B cell (primary cell): ENCODE measurements at regions of chr3 and their contacts with region 1.

Region 1: DNA sequence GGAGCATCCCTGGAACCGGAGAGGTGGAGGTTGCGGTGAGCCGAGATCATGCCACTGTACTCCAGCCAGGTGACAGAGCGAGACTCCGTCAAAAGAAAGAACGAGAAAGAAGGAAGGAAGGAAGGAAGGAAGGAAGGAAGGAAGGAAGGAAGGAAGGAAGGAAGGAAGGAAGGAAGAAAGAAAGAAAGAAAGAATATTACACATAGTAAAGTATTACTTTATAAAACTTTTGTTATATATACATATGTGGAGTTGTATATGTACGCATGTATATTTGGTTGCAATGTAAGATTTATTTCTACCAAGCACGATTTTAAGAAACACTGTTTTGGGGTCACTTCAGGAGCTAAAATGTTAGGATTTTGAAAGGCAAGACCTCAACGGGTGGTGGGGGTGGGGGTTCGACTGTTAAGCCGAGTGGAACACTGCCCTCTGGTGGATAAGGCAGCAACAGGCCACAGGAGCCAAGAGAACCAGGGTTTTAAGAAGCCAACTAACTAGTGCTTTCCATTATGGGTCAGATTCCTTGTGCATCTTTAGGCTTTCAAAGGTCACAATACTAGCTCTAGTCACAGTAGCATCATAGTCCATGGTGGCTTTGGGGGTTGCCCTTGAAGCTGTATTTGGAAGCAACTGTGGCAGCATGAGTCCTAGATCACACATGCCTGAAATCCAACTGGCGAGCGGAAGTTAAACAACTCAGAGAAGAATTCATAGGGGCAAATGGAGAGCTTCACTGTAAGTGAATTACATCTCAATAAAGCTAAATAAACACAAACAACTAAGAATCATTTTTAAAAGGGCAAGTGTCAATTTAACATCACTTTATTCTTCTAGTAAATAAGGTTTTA is 22.5 kb downstream of the GLB1 start:
- DNase-seq: peak; percentile 79
- ATAC-seq: peak; percentile 69
- H3K4me3 ChIP-seq: no peak overlapping the region
- H3K4me3 Mint-ChIP-seq: no peak overlapping the region
- H3K27ac ChIP-seq: no peak overlapping the region
- H3K27ac Mint-ChIP-seq: no peak overlapping the region
- H3K4me1 ChIP-seq: peaks cover 3 to 7% of the 10 kb centered on the region in 2 donors
- H3K4me1 Mint-ChIP-seq: peaks cover 26% of the 10 kb centered on the region
- H3K27me3 ChIP-seq: no peaks in the 10 kb centered on the region
- H3K27me3 Mint-ChIP-seq: no peaks in the 10 kb centered on the region
- CTCF ChIP-seq: peak; percentile 85

Region 2: DNA sequence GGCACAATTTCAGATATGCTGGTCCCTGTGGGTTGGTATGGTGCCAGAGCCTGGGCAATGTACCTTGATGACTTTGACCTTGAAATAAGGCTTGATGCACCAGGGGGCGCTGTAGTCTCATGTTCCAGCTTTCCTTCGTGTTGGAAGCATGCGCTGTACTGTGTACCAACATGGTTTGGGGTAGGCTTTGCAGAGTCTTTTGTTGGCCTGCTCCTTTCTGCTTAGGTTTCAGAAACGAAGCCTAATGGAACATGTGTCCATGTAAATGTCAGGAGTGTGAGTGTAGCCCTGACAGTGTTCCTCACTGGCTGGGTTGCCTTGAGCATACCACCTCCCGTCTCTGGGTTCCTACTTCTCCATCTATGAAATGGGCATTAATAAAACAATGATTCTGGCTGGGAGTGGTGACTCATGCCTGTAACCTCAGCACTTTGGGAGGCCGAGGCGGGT is 126.6 kb before region 1 on chr3:
- CTCF ChIA-PET with region 1: interaction called, 132 read pairs
- POLR2A ChIA-PET with region 1: interaction called, 6 read pairs
- intact Hi-C with region 1: no loop called
- DNase-seq: peak; percentile 88
- ATAC-seq: peak; percentile 83
- H3K4me3 ChIP-seq: no peak overlapping the region
- H3K4me3 Mint-ChIP-seq: no peak overlapping the region
- H3K27ac ChIP-seq: no peak overlapping the region
- H3K27ac Mint-ChIP-seq: no peak overlapping the region
- H3K4me1 ChIP-seq: peaks cover 0 to 18% of the 10 kb centered on the region in 2 donors
- H3K4me1 Mint-ChIP-seq: peaks cover 13% of the 10 kb centered on the region
- H3K27me3 ChIP-seq: no peaks in the 10 kb centered on the region
- H3K27me3 Mint-ChIP-seq: no peaks in the 10 kb centered on the region
- CTCF ChIP-seq: peak; percentile 87

Region 3: GRCh38 chr3:33063651-33064051 is 10.8 kb before region 1 on chr3:
- CTCF ChIA-PET with region 1: interaction called, 26 read pairs
- POLR2A ChIA-PET with region 1: interaction called, 3 read pairs
- intact Hi-C with region 1: no loop called
- DNase-seq: peak; percentile 68
- ATAC-seq: peak; percentile 82
- H3K4me3 ChIP-seq: no peak overlapping the region
- H3K4me3 Mint-ChIP-seq: peak overlapping the region; percentile 49
- H3K27ac ChIP-seq: peak overlapping the region in 1 of 2 donors; percentile 50
- H3K27ac Mint-ChIP-seq: peak overlapping the region; percentile 92
- H3K4me1 ChIP-seq: peaks cover 28 to 68% of the 10 kb centered on the region in 2 donors
- H3K4me1 Mint-ChIP-seq: peaks cover 43% of the 10 kb centered on the region
- H3K27me3 ChIP-seq: no peaks in the 10 kb centered on the region
- H3K27me3 Mint-ChIP-seq: no peaks in the 10 kb centered on the region
- CTCF ChIP-seq: no peak

Region 4: GRCh38 chr3:33096093-33096868 is 21.8 kb after region 1 on chr3:
- CTCF ChIA-PET with region 1: interaction called, 6 read pairs
- POLR2A ChIA-PET with region 1: no interaction called
- intact Hi-C with region 1: loop called (anchors 2 kb)
- DNase-seq: peak; percentile 83
- ATAC-seq: peak; percentile 63
- H3K4me3 ChIP-seq: peak overlapping the region; percentile 83 to 100 (median 94)
- H3K4me3 Mint-ChIP-seq: peak overlapping the region; percentile 96
- H3K27ac ChIP-seq: peak overlapping the region; percentile 94 to 96
- H3K27ac Mint-ChIP-seq: peak overlapping the region; percentile 94
- H3K4me1 ChIP-seq: peaks cover 11 to 21% of the 10 kb centered on the region in 2 donors
- H3K4me1 Mint-ChIP-seq: peaks cover 35% of the 10 kb centered on the region
- H3K27me3 ChIP-seq: no peaks in the 10 kb centered on the region
- H3K27me3 Mint-ChIP-seq: no peaks in the 10 kb centered on the region
- CTCF ChIP-seq: no peak

Region 5: GRCh38 chr3:34000301-34000700 is 925.9 kb after region 1 on chr3:
- CTCF ChIA-PET with region 1: no interaction called
- POLR2A ChIA-PET with region 1: no interaction called
- intact Hi-C with region 1: no loop called
- DNase-seq: no peak
- ATAC-seq: no peak
- H3K4me3 ChIP-seq: no peak overlapping the region
- H3K4me3 Mint-ChIP-seq: no peak overlapping the region
- H3K27ac ChIP-seq: no peak overlapping the region
- H3K27ac Mint-ChIP-seq: no peak overlapping the region
- H3K4me1 ChIP-seq: no peaks in the 10 kb centered on the region
- H3K4me1 Mint-ChIP-seq: no peaks in the 10 kb centered on the region
- H3K27me3 ChIP-seq: no peaks in the 10 kb centered on the region
- H3K27me3 Mint-ChIP-seq: no peaks in the 10 kb centered on the region
- CTCF ChIP-seq: no peak